ENCODE measurements at regions of chr5 and their contacts with region 1.

Region 1: DNA sequence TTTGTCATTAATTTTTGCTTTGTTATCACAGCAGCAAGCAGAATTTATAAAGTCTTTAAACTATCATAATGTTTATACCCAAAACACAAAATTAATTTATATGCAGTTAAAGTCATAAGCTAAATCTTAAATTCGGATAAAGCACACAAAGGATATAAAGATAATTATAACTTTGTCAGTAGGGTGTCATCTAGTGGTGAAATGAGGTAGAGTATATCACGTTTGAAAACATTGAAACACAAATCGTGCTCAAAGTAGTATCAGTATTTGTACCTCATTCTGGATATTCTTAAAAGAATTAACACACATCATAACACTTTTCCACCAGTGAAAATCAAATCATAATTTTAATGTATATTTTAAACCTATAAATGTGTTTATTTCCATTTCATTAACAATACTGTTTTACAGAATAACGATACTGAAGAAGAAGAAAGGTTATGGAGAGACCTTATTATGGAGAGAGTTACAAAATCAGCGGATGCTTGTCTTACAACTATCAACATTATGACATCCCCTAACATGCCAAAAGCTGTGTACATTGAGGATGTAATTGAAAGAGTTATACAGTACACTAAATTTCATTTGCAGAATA is 129.5 kb downstream of the NIPBL start:
- DNase-seq: no peak
- H3K4me3 ChIP-seq: no peak overlapping the region
- H3K27ac ChIP-seq: no peak overlapping the region
- H3K4me1 ChIP-seq: no peaks in the 10 kb centered on the region
- H3K27me3 ChIP-seq: no peaks in the 10 kb centered on the region
- CTCF ChIP-seq: peak in 2 of 3 experiments; percentile 43 to 59

Region 2: DNA sequence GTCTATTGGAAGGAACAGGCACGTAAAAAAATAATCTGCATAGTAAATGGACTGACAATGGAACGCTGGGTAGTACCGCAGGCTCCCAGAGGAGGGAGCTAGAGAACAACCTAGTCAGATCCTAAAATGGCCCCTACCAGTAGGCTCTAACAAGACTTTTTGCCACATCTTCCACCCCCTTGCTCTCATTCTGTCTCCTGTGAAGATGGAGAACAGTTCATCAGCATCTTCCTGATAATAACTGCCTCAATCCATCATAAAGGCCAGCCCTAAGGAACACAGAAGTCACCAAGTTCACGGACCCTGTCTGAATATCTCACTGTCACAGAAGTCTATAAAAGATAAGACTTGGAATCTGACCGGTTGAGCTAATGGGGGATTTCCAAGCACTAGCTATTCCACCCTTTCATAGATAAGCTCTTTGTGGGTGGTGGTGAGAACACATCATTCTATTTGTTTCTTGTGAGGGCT is 266.3 kb before region 1 on chr5:
- intact Hi-C with region 1: loop called (anchors 5 kb)
- DNase-seq: peak in 1 of 2 donors; percentile 80
- H3K4me3 ChIP-seq: no peak overlapping the region
- H3K27ac ChIP-seq: no peak overlapping the region
- H3K4me1 ChIP-seq: peaks cover 0 to 4% of the 10 kb centered on the region in 2 donors
- H3K27me3 ChIP-seq: no peaks in the 10 kb centered on the region
- CTCF ChIP-seq: peak; percentile 22 to 60 (median 42)

Region 3: GRCh38 chr5:36866174-36866573 is 139.9 kb before region 1 on chr5:
- intact Hi-C with region 1: no loop called
- DNase-seq: no peak
- H3K4me3 ChIP-seq: no peak overlapping the region
- H3K27ac ChIP-seq: no peak overlapping the region
- H3K4me1 ChIP-seq: peaks cover 0 to 2% of the 10 kb centered on the region in 2 donors
- H3K27me3 ChIP-seq: no peaks in the 10 kb centered on the region
- CTCF ChIP-seq: no peak

Measured in ascending aorta (tissue), 2 donors.